ENCODE measurements at regions of chr12 and their contacts with region 1.

Region 1: DNA sequence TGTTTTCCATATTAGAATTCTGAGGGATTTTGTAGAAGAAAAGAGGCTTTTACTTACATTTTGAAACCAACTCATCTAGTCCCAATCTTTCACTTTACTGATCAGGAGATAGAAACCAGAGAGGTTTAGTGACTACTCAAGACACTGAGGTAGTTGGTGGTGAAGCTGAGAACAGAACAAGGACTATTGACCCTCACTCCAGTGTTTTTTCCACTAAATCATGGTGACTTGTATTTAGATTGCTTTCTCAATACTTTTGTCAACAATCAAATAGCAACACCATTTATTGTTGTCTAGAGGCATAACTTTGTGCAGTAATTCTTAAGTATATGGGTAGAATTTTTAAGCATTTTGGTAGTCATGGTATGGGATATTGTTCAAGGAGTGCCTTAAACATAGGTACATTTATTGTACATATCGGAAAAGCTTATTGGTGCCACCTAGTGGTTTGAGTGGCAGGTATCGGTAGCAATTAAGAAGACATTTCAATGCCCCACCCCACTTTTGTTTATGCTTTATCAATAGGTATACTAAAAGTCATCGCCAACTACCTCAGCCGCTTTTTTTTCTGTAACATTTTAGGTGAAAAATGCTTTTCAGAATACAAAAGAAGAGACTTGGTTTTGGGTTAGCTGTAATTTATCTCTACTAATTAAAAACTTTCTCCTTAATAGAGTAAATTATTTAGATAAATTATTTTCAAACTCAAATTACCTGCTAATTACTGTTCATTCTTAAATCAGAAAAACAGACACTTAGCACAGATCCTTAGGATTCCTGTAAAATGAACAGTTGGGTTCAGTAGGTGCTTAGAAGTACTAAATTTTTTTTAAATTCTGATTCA is 47.3 kb upstream of the PAWR start:
- DNase-seq: peak; percentile 44 to 59 (median 50)
- ATAC-seq: peak; percentile 74
- H3K4me3 ChIP-seq: no peak overlapping the region
- H3K27ac ChIP-seq: no peak overlapping the region
- H3K4me1 ChIP-seq: no peaks in the 10 kb centered on the region
- H3K27me3 ChIP-seq: no peaks in the 10 kb centered on the region
- CTCF ChIP-seq: peak in 2 of 3 experiments; percentile 54 to 60; a peak in 4 of 6 replicates
- EP300 ChIP-seq: no peak
- POLR2A ChIP-seq: no peak
- RAD21 ChIP-seq: peak in 1 of 2 experiments; percentile 64; a peak in 2 of 4 replicates

Region 2: GRCh38 chr12:78002878-78003277 is 1735.2 kb before region 1 on chr12:
- CTCF ChIA-PET with region 1: interaction called, 3 read pairs
- POLR2A ChIA-PET with region 1: no interaction called
- in situ Hi-C with region 1: no loop called
- intact Hi-C with region 1: loop called (anchors 5 kb)
- DNase-seq: no peak
- ATAC-seq: no peak
- H3K4me3 ChIP-seq: no peak overlapping the region
- H3K27ac ChIP-seq: no peak overlapping the region
- H3K4me1 ChIP-seq: no peaks in the 10 kb centered on the region
- H3K27me3 ChIP-seq: no peaks in the 10 kb centered on the region
- CTCF ChIP-seq: no peak
- EP300 ChIP-seq: no peak
- POLR2A ChIP-seq: no peak
- RAD21 ChIP-seq: no peak

Measured in K562 (cell line).